H1 (cell line): ENCODE measurements at regions of chr19 and their contacts with region 1.

Region 1: DNA sequence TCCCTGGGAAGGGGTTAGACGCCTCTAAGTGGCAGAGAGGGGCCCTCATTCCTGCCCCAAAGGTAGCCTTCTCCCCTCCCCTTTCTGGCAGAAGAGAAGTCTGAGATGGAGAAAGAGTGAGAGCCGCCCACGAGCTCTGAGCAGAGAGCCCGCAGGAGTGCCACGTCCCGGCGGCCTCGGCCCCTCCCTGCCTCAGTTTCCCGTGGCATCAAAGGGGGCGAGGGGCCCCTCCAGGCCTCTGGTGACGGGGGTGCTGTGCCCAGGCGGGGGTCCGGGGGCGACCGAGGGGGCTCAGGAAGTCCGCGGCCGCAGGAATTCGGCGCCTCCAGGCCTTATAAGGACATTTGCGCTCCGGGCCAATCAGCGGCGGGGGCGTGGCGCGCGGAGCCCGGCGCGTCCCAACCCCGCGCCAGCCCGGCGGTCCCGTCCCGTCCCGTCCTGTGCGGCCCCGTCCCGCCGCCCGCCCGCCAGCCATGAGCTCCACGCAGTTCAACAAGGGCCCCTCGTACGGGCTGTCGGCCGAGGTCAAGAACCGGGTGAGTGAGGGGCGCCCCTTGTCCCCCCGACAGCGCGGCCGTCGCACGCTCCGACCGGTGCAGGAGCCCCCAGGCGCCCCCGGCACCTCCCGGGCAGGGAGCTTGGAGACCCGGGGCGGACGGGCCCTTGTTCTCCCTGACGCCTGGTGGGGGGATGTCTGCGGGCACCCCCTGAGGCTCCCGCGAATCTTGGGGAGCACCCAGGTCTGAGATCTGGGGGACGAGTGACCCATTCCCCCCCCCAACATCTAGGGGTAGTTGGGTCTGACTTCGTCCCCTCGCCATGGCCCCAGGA is at the start of gene CNN2:
- DNase-seq: peak in 1 of 2 experiments; percentile 92
- H3K4me3 ChIP-seq: peak within 1 kb of the TSS; percentile 85 to 99 (median 96)
- H3K27ac ChIP-seq: peak within 1 kb of the TSS; percentile 94
- H3K4me1 ChIP-seq: peaks cover 0 to 9% (median 4%) of the 10 kb centered on the region in 4 experiments; a peak in 5 of 7 replicates
- H3K27me3 ChIP-seq: no peaks in the 10 kb centered on the region
- CTCF ChIP-seq: no peak
- EP300 ChIP-seq: peak in 1 of 2 experiments; percentile 83; a peak in 1 of 3 replicates
- POLR2A ChIP-seq: peak; percentile 81 to 88
- RAD21 ChIP-seq: no peak
- total RNA-seq, gene CNN2: 522 and 551 TPM in 2 replicates

Region 2: GRCh38 chr19:778910-779653 is 247.3 kb before region 1 on chr19:
- CTCF ChIA-PET with region 1: no interaction called
- POLR2A ChIA-PET with region 1: interaction called, 12 read pairs
- DNase-seq: no peak
- H3K4me3 ChIP-seq: no peak overlapping the region
- H3K27ac ChIP-seq: no peak overlapping the region
- H3K4me1 ChIP-seq: peaks cover 7 to 15% (median 11%) of the 10 kb centered on the region in 4 experiments
- H3K27me3 ChIP-seq: no peaks in the 10 kb centered on the region
- CTCF ChIP-seq: no peak
- EP300 ChIP-seq: no peak
- POLR2A ChIP-seq: no peak
- RAD21 ChIP-seq: no peak

Region 3: GRCh38 chr19:925526-926322 is 100.7 kb before region 1 on chr19 and contains the start of gene ARID3A:
- CTCF ChIA-PET with region 1: interaction called, 3 read pairs
- POLR2A ChIA-PET with region 1: interaction called, 16 read pairs
- DNase-seq: peak in 1 of 2 experiments; percentile 75
- H3K4me3 ChIP-seq: peak within 1 kb of the TSS; percentile 65 to 97 (median 76)
- H3K27ac ChIP-seq: peak within 1 kb of the TSS; percentile 39; the same call in 1 of the 2 replicates
- H3K4me1 ChIP-seq: peaks cover 2 to 8% (median 6%) of the 10 kb centered on the region in 4 experiments
- H3K27me3 ChIP-seq: peaks cover 6 to 8% (median 8%) of the 10 kb centered on the region in 4 experiments
- CTCF ChIP-seq: no peak
- EP300 ChIP-seq: no peak
- POLR2A ChIP-seq: no peak
- RAD21 ChIP-seq: no peak
- total RNA-seq, gene ARID3A: 77.4 and 78.4 TPM in 2 replicates

Region 4: GRCh38 chr19:1009041-1009975 is 17.1 kb before region 1 on chr19:
- CTCF ChIA-PET with region 1: interaction called, 5 read pairs
- POLR2A ChIA-PET with region 1: interaction called, 48 read pairs
- DNase-seq: no peak
- H3K4me3 ChIP-seq: no peak overlapping the region
- H3K27ac ChIP-seq: no peak overlapping the region
- H3K4me1 ChIP-seq: no peaks in the 10 kb centered on the region
- H3K27me3 ChIP-seq: no peaks in the 10 kb centered on the region
- CTCF ChIP-seq: no peak
- EP300 ChIP-seq: no peak
- POLR2A ChIP-seq: no peak
- RAD21 ChIP-seq: no peak

Region 5: GRCh38 chr19:1057176-1057855 is 30.9 kb after region 1 on chr19:
- CTCF ChIA-PET with region 1: interaction called, 3 read pairs
- POLR2A ChIA-PET with region 1: interaction called, 97 read pairs
- DNase-seq: no peak
- H3K4me3 ChIP-seq: no peak overlapping the region
- H3K27ac ChIP-seq: no peak overlapping the region
- H3K4me1 ChIP-seq: peaks cover 0 to 2% (median 0%) of the 10 kb centered on the region in 4 experiments; a peak in 1 of 7 replicates
- H3K27me3 ChIP-seq: no peaks in the 10 kb centered on the region; a peak in 1 of 7 replicates
- CTCF ChIP-seq: no peak
- EP300 ChIP-seq: no peak
- POLR2A ChIP-seq: no peak
- RAD21 ChIP-seq: no peak

Region 6: DNA sequence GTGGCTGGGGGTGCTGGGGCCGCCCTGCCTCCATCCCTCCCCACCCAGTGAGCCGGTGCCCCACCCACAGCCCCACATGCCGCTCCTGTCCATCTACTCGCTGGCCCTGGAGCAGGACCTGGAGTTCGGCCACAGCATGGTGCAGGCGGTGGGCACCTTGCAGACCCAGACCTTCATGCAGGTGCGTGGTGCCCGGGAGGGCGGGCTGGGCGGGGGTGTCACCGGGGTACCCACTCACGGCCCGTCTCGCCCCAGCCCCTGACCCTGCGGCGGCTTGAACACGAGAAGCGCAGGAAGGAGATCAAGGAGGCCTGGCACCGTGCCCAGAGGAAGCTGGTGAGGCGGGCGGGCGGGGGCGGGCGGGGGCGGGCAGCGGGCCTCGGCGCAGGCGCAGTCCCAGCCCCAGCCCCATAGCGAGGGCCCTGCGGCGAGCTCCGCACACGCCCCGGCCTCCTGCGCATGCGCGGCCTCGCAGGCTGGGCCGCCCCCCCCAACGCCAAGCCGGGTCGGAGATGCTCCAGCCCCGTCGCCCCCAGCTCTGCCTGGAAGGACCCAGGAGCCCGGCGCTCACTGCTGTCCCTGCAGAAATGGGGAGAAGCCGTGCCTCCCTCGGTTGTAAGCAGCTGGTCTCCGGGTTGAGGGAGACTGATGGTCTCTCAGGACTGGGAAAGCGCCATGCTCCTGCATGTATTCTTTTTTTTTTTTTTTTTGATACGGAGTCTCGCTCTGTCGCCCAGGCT is 48.3 kb after region 1 on chr19:
- CTCF ChIA-PET with region 1: interaction called, 5 read pairs
- POLR2A ChIA-PET with region 1: interaction called, 58 read pairs
- DNase-seq: no peak
- H3K4me3 ChIP-seq: no peak overlapping the region
- H3K27ac ChIP-seq: no peak overlapping the region
- H3K4me1 ChIP-seq: peaks cover 0 to 4% (median 1%) of the 10 kb centered on the region in 4 experiments; a peak in 2 of 7 replicates
- H3K27me3 ChIP-seq: peaks cover 0 to 4% (median 2%) of the 10 kb centered on the region in 4 experiments; a peak in 2 of 7 replicates
- CTCF ChIP-seq: no peak
- EP300 ChIP-seq: no peak
- POLR2A ChIP-seq: no peak
- RAD21 ChIP-seq: no peak

Region 7: DNA sequence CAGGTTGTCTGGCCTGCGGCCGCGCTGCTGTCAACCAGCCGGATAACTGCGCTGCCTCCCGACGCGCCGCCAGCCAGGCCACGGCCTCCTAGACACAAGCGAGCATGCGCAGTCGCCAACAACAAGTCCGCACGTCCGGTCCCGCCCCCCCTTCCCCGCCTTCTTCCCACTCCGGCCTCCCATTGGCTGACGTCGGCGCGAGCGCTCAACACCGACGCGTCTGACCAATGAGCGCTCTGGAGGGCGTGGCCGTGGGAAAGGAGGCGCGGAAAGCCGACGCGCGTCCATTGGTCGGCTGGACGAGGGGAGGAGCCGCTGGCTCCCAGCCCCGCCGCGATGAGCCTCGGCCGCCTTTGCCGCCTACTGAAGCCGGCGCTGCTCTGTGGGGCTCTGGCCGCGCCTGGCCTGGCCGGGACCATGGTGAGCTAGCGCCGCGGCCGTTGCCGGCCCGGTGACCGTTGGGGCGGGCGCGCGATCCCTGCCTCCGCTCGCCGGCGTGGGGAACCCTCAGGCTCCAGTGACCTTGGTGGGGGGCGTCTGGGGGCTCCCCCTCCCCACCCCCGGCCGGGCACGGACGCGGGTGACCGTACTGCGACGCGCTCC is 77.4 kb after region 1 on chr19 and contains the start of gene GPX4:
- CTCF ChIA-PET with region 1: no interaction called
- POLR2A ChIA-PET with region 1: interaction called, 11 read pairs
- DNase-seq: peak; percentile 95 to 98
- H3K4me3 ChIP-seq: peak within 1 kb of the TSS; percentile 57 to 93 (median 64)
- H3K27ac ChIP-seq: peak within 1 kb of the TSS; percentile 66; the same call in 1 of the 2 replicates
- H3K4me1 ChIP-seq: peaks cover 4 to 21% (median 8%) of the 10 kb centered on the region in 4 experiments
- H3K27me3 ChIP-seq: no peaks in the 10 kb centered on the region
- CTCF ChIP-seq: no peak
- EP300 ChIP-seq: no peak
- POLR2A ChIP-seq: peak; percentile 95 to 96
- RAD21 ChIP-seq: no peak
- total RNA-seq, gene GPX4: 342 and 355 TPM in 2 replicates

Region 8: GRCh38 chr19:1324806-1325567 is 298.6 kb after region 1 on chr19:
- CTCF ChIA-PET with region 1: no interaction called
- POLR2A ChIA-PET with region 1: no interaction called
- DNase-seq: no peak
- H3K4me3 ChIP-seq: peak overlapping the region in 1 of 4 experiments; percentile 36; a peak in 2 of 8 replicates
- H3K27ac ChIP-seq: no peak overlapping the region
- H3K4me1 ChIP-seq: no peaks in the 10 kb centered on the region
- H3K27me3 ChIP-seq: no peaks in the 10 kb centered on the region; a peak in 1 of 7 replicates
- CTCF ChIP-seq: no peak
- EP300 ChIP-seq: no peak
- POLR2A ChIP-seq: no peak
- RAD21 ChIP-seq: no peak